Gastrocnemius medialis (tissue), 4 donors: ENCODE measurements at regions of chr4 and their contacts with region 1.

Region 1: GRCh38 chr4:153573881-153574802 is 108.0 kb downstream of the TMEM131L start:
- DNase-seq: peak; percentile 54 to 76
- ATAC-seq: peak; percentile 79 to 83
- H3K4me3 ChIP-seq: no peak overlapping the region
- H3K27ac ChIP-seq: peak overlapping the region; percentile 83 to 94 (median 86)
- H3K4me1 ChIP-seq: peaks cover 43 to 53% of the 10 kb centered on the region in 2 donors
- H3K27me3 ChIP-seq: no peaks in the 10 kb centered on the region
- CTCF ChIP-seq: peak; percentile 61 to 74 (median 68)
- POLR2A ChIP-seq: no peak

Region 2: DNA sequence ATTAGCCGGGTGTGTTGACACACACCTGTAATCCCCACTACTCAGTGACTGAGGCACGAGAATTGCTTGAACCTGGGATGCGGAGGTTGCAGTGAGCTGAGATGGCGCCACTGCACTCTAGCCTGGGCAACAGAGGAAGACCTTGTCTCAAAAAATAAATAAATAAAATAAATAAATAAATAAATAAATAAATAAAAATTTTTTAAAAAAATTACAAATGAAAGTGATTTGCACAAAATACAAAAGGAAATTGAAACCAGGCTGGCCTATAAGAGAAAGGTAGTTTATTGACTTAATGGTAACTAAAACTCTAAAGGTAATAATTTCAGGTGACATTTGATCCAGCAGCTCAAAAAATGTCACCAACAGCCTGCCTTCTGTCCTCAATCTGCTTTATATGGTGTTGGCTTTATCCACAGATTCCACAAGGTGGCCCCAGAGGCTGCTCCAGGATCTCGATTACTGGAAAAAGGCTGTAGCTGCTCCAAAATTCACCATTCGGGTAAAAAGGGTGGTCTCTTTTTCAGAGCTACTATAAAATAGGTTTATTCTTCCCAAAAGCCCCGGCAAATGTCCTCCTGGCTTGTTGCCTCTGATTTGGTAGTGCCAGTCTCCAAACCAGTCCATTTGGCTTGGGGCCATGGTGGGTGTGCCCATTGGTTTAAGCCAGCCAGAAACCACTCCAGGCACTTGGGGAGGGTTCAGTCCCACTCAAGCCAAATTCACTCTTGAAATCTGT is 431.3 kb before region 1 on chr4:
- in situ Hi-C with region 1: loop called in 1 of 4 experiments (anchors 10 kb)
- intact Hi-C with region 1: loop called (anchors 5 kb)
- DNase-seq: peak; percentile 8 to 35
- ATAC-seq: peak; percentile 60 to 65
- H3K4me3 ChIP-seq: peak overlapping the region in 3 of 4 donors; percentile 16 to 44 (median 26)
- H3K27ac ChIP-seq: no peak overlapping the region
- H3K4me1 ChIP-seq: peaks cover 0 to 6% of the 10 kb centered on the region in 2 donors
- H3K27me3 ChIP-seq: no peaks in the 10 kb centered on the region
- CTCF ChIP-seq: peak; percentile 68 to 82 (median 74)
- POLR2A ChIP-seq: no peak

Region 3: DNA sequence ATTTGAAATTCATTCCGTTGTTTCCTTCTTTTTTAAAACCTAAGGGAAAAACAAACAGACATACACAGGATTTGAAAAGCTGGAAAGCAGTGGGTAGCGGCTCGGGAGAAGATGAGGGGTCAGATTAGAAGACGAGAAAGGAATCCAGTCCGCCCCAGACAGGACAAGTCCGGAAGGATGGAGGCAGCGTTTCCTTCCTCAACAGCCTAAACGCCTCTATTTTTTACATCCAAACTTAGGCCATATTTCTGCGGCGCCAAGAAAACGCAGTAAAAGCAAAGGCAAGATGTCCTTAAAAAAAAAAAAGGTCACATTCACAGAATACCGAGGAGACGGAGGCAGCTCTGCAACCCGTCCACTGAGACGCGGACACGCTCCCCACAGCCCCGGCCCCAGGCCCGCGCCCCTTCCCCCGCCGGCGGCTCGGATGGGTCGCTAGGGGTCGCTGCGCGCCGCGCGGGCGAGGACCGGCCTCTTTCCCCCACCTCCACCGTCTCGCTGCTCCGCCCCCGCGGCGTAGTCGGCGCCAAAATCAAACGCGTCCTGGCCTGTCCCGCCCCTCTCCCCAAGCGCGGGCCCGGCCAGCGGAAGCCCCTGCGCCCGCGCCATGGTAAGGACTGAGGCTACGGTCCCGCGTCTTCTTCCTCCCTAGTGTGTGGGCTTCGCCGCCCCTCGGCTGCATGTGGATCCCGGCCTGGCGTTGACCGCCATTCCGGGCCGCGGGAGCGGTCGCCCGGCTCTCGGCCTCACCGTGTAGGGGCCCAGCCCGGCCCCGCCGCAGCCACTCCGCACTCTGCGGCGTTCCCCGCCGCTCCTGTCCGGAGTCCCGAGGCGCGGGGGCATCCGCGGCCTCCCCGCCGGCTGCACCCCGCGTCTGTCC is 229.8 kb before region 1 on chr4 and contains the start of gene MND1:
- in situ Hi-C with region 1: loop called in 3 of 4 experiments (anchors 5 to 10 kb)
- intact Hi-C with region 1: loop called (anchors 1 kb)
- DNase-seq: peak; percentile 58 to 64
- ATAC-seq: peak; percentile 90 to 94
- H3K4me3 ChIP-seq: peak within 1 kb of the TSS; percentile 70 to 97 (median 76)
- H3K27ac ChIP-seq: peak within 1 kb of the TSS in 1 of 4 donors; percentile 16
- H3K4me1 ChIP-seq: peaks cover 0 to 4% of the 10 kb centered on the region in 2 donors
- H3K27me3 ChIP-seq: no peaks in the 10 kb centered on the region
- CTCF ChIP-seq: peak; percentile 74 to 97 (median 87)
- POLR2A ChIP-seq: no peak
- total RNA-seq, gene MND1: 1.6 TPM in 1 of 4 donors, not detected in the others

Region 4: DNA sequence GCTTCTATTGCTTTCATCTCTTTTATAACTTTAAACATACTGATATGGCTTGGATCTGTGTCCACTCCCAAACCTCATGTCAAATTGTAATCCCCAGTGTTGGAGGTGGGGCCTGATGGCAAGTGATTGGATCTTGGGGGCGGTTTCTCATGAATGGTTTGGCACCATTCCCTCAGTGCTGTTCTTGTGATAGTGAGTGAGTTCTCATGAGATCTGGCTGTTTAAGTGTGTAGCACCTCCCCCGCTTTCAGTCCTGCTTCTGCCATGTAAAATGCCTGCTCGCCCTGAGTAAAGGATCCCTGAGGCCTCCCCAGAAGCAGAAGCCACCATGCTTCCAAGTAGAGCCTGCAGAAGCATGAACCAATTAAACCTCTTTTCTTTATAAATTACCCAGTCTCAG is 212.0 kb before region 1 on chr4:
- in situ Hi-C with region 1: no loop called
- intact Hi-C with region 1: no loop called
- DNase-seq: no peak
- ATAC-seq: no peak
- H3K4me3 ChIP-seq: no peak overlapping the region
- H3K27ac ChIP-seq: no peak overlapping the region
- H3K4me1 ChIP-seq: no peaks in the 10 kb centered on the region
- H3K27me3 ChIP-seq: no peaks in the 10 kb centered on the region
- CTCF ChIP-seq: no peak
- POLR2A ChIP-seq: no peak

Region 5: GRCh38 chr4:153448003-153448731 is 126.0 kb before region 1 on chr4:
- in situ Hi-C with region 1: loop called in 1 of 4 experiments (anchors 10 kb)
- intact Hi-C with region 1: no loop called
- DNase-seq: no peak
- ATAC-seq: peak; percentile 37 to 62
- H3K4me3 ChIP-seq: peak overlapping the region; percentile 34 to 48 (median 40)
- H3K27ac ChIP-seq: peak overlapping the region; percentile 20 to 64 (median 52)
- H3K4me1 ChIP-seq: peaks cover 13 to 15% of the 10 kb centered on the region in 2 donors
- H3K27me3 ChIP-seq: no peaks in the 10 kb centered on the region
- CTCF ChIP-seq: no peak
- POLR2A ChIP-seq: no peak

Region 6: DNA sequence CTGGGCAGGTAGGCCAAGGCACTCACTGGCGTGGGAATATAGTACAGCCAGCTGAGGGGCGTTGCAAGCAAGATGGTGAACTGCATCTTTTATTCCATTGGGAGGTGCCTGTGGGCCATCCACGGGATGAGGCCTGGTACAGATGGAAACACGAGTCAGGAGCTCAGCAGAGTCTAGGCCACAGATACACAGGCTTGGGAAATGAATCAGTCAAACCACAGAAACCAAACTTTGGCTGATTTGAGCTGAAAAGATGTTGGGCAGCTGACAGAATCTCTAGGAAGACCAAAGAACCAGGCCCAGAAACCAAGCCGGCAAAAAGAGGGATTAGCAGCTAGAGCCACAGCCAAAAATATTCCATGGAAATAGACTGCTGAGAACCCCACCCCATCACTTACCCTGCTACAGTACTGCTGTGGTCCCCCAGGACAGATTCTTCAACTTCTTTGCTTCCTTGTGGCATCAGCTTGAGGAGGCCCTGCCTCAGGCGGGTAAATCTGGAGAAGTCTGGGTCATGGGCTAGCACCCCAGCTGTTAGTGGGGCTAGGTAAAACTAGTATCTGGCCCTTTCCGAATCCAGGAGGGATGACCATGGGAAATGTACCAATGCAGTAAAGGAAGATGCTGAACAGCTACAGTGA is 32.6 kb before region 1 on chr4:
- in situ Hi-C with region 1: no loop called
- intact Hi-C with region 1: loop called (anchors 1 kb)
- DNase-seq: no peak
- ATAC-seq: no peak
- H3K4me3 ChIP-seq: no peak overlapping the region
- H3K27ac ChIP-seq: peak overlapping the region; percentile 46 to 88 (median 76)
- H3K4me1 ChIP-seq: peaks cover 61 to 69% of the 10 kb centered on the region in 2 donors
- H3K27me3 ChIP-seq: no peaks in the 10 kb centered on the region
- CTCF ChIP-seq: no peak
- POLR2A ChIP-seq: no peak